ENCODE measurements at regions of chr5 and their contacts with region 1.

Region 1: GRCh38 chr5:154610321-154611154 is 132.5 kb upstream of the HAND1 start:
- DNase-seq: peak; percentile 96
- H3K4me3 ChIP-seq: peak overlapping the region; percentile 14 to 47; a peak in 3 of 4 replicates
- H3K27ac ChIP-seq: no peak overlapping the region
- H3K4me1 ChIP-seq: peaks cover 0 to 37% of the 10 kb centered on the region in 2 experiments; a peak in 1 of 4 replicates
- H3K27me3 ChIP-seq: peaks cover 7% of the 10 kb centered on the region
- CTCF ChIP-seq: peak; percentile 86
- EP300 ChIP-seq: peak in 1 of 2 experiments; percentile 11; a peak in 1 of 4 replicates
- RAD21 ChIP-seq: peak; percentile 100

Region 2: GRCh38 chr5:154325566-154325965 is 285.0 kb before region 1 on chr5:
- CTCF ChIA-PET with region 1: no interaction called
- POLR2A ChIA-PET with region 1: no interaction called
- DNase-seq: no peak
- H3K4me3 ChIP-seq: no peak overlapping the region
- H3K27ac ChIP-seq: no peak overlapping the region
- H3K4me1 ChIP-seq: no peaks in the 10 kb centered on the region; a peak in 1 of 4 replicates
- H3K27me3 ChIP-seq: no peaks in the 10 kb centered on the region
- CTCF ChIP-seq: no peak
- EP300 ChIP-seq: no peak
- RAD21 ChIP-seq: no peak

Region 3: DNA sequence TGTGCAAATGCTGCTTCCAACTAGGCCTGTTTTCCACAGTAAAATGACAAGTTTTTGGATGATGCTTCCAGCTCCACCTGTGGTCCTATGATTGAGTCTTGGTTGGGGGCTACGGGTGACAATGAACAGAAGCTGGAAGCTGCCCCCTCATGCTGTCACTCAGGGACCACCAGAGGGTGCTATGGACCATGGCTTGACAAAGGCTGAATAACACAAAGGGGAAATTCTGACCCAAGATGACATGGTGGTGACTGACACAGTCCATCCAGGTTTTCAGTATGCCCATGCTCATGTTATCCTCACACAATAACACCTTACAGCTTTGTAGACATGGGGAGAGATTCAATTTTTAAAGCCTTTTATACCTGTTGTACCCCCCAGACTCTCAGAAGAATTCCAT is 188.7 kb before region 1 on chr5:
- CTCF ChIA-PET with region 1: interaction called, 18 read pairs
- POLR2A ChIA-PET with region 1: interaction called, 3 read pairs
- DNase-seq: peak; percentile 58
- H3K4me3 ChIP-seq: no peak overlapping the region
- H3K27ac ChIP-seq: no peak overlapping the region
- H3K4me1 ChIP-seq: peaks cover 0 to 8% of the 10 kb centered on the region in 2 experiments; a peak in 2 of 4 replicates
- H3K27me3 ChIP-seq: no peaks in the 10 kb centered on the region
- CTCF ChIP-seq: peak; percentile 51
- EP300 ChIP-seq: no peak
- RAD21 ChIP-seq: peak; percentile 75

Region 4: GRCh38 chr5:154461531-154461930 is 149.0 kb before region 1 on chr5:
- CTCF ChIA-PET with region 1: interaction called, 161 read pairs
- POLR2A ChIA-PET with region 1: no interaction called
- DNase-seq: no peak
- H3K4me3 ChIP-seq: no peak overlapping the region
- H3K27ac ChIP-seq: no peak overlapping the region
- H3K4me1 ChIP-seq: peaks cover 0 to 18% of the 10 kb centered on the region in 2 experiments; a peak in 1 of 4 replicates
- H3K27me3 ChIP-seq: no peaks in the 10 kb centered on the region
- CTCF ChIP-seq: peak; percentile 39
- EP300 ChIP-seq: no peak
- RAD21 ChIP-seq: peak; percentile 44

Region 5: DNA sequence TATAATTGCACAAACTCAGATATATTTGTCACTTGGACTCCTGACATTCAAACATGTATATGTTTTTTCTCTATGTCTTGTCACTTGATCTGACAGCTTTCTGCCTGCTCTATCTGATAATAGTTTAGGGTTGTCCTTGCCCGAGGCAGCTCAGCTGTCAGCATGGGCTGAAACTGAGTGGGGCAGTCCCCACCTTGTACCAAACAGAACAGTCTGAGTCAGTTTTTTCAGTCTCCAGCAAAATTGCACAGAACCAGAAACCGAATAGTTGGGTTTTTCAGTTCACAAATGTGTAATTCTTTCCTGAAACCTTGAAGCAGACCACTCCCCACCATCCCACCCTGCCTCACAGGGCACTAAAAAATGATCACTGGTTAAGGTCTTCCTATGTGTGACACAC is 123.0 kb before region 1 on chr5:
- CTCF ChIA-PET with region 1: interaction called, 30 read pairs
- POLR2A ChIA-PET with region 1: no interaction called
- DNase-seq: peak; percentile 81
- H3K4me3 ChIP-seq: no peak overlapping the region
- H3K27ac ChIP-seq: peak overlapping the region in 1 of 2 experiments; percentile 100; a peak in 2 of 4 replicates
- H3K4me1 ChIP-seq: peaks cover 0 to 50% of the 10 kb centered on the region in 2 experiments; a peak in 2 of 4 replicates
- H3K27me3 ChIP-seq: peaks cover 50% of the 10 kb centered on the region
- CTCF ChIP-seq: no peak
- EP300 ChIP-seq: peak in 1 of 2 experiments; percentile 99; a peak in 2 of 4 replicates
- RAD21 ChIP-seq: peak; percentile 33; the same call in 1 of the 2 replicates

Region 6: DNA sequence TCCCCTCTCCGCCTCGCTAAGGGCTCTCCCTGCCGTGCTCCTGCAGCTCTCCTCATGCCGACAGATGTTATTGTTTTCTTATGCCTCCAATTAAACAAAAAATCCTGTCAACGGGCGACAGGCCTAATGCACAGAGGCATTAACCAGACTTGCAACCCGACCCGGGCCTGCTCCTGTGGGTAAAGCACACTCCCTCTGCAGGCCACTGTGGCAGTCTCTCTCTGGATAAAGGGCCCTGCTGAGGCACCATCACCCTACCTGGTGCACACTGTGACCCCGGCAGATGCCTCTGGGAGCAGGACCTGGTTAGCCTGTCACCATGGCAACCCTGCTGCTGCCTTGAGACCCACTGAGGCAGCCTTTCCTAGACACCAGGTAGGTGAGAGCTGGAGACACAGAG is 104.9 kb before region 1 on chr5:
- CTCF ChIA-PET with region 1: interaction called, 13 read pairs
- POLR2A ChIA-PET with region 1: no interaction called
- DNase-seq: peak; percentile 83
- H3K4me3 ChIP-seq: no peak overlapping the region
- H3K27ac ChIP-seq: peak overlapping the region in 1 of 2 experiments; percentile 92; a peak in 2 of 4 replicates
- H3K4me1 ChIP-seq: peaks cover 0 to 28% of the 10 kb centered on the region in 2 experiments; a peak in 2 of 4 replicates
- H3K27me3 ChIP-seq: no peaks in the 10 kb centered on the region; the same call in none of the 2 replicates
- CTCF ChIP-seq: no peak
- EP300 ChIP-seq: peak in 1 of 2 experiments; percentile 86; a peak in 2 of 4 replicates
- RAD21 ChIP-seq: peak; percentile 55